Lower leg skin (tissue), 4 donors: ENCODE measurements at regions of chr5 and their contacts with region 1.

Region 1: GRCh38 chr5:72280581-72281170 is 39.4 kb downstream of the MRPS27 start:
- DNase-seq: no peak
- H3K4me3 ChIP-seq: no peak overlapping the region
- CTCF ChIP-seq: no peak
- POLR2A ChIP-seq: no peak

Region 2: GRCh38 chr5:71782771-71783770 is 497.6 kb before region 1 on chr5:
- intact Hi-C with region 1: loop called (anchors 10 kb)
- DNase-seq: peak; percentile 82 to 95
- H3K4me3 ChIP-seq: no peak overlapping the region
- CTCF ChIP-seq: peak in 1 of 3 donors; percentile 40
- POLR2A ChIP-seq: no peak

Region 3: GRCh38 chr5:72244862-72245371 is 35.8 kb before region 1 on chr5:
- intact Hi-C with region 1: no loop called
- DNase-seq: no peak
- H3K4me3 ChIP-seq: no peak overlapping the region
- CTCF ChIP-seq: no peak
- POLR2A ChIP-seq: no peak